OCI-LY7 (cell line): ENCODE measurements at regions of chr2 and their contacts with region 1.

Region 1: DNA sequence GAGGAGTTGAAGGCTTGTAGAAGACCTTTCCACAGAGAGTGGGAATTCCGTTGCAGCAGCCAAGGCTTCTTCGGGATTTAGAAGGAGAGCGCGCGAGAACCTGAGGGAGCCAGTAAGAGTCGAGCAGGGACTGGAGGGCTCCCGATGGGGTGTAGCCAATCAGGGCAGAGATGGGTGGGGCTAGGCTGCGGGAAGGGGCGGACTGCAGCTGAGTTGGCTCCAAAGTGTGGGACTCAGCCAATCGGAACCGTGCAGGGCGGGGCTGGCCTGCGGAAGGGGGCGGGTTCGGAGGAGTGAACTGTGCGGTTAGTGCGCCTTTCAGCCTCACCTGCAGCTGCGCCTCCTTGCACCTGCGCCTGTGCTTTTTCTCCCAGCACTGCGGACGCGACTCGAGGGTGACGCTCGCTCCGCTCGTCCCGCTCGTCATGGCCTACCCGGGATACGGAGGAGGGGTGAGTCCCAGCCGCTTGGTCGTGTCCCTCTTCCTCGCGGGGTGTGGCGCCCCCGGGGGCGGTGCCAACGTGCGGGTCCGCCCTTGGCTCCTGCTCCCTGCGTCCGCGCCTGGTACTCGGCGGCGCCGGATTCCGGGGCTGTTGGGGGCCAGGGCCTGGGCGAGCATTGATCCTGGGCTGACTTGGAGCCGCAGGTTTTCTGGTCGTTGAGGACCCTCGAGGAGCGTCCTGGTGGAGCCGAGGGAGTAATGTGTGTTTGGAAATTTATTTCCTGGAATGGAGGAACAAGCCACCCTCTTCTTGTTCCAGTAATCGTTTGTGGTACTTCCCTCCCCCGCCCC is at the start of gene GCA:
- DNase-seq: peak; percentile 95
- H3K4me3 ChIP-seq: peak within 1 kb of the TSS; percentile 81
- H3K27ac ChIP-seq: peak within 1 kb of the TSS; percentile 59
- H3K4me1 ChIP-seq: peaks cover 22% of the 10 kb centered on the region
- CTCF ChIP-seq: no peak
- total RNA-seq, gene GCA: 31.9 and 37.3 TPM in 2 replicates

Region 2: GRCh38 chr2:162317861-162318327 is 26.1 kb before region 1 on chr2:
- CTCF ChIA-PET with region 1: interaction called, 3 read pairs
- POLR2A ChIA-PET with region 1: interaction called, 8 read pairs
- intact Hi-C with region 1: loop called (anchors 1 kb)
- DNase-seq: peak; percentile 45
- H3K4me3 ChIP-seq: peak overlapping the region; percentile 100
- H3K27ac ChIP-seq: peak overlapping the region; percentile 74
- H3K4me1 ChIP-seq: peaks cover 36% of the 10 kb centered on the region
- CTCF ChIP-seq: no peak

Region 3: DNA sequence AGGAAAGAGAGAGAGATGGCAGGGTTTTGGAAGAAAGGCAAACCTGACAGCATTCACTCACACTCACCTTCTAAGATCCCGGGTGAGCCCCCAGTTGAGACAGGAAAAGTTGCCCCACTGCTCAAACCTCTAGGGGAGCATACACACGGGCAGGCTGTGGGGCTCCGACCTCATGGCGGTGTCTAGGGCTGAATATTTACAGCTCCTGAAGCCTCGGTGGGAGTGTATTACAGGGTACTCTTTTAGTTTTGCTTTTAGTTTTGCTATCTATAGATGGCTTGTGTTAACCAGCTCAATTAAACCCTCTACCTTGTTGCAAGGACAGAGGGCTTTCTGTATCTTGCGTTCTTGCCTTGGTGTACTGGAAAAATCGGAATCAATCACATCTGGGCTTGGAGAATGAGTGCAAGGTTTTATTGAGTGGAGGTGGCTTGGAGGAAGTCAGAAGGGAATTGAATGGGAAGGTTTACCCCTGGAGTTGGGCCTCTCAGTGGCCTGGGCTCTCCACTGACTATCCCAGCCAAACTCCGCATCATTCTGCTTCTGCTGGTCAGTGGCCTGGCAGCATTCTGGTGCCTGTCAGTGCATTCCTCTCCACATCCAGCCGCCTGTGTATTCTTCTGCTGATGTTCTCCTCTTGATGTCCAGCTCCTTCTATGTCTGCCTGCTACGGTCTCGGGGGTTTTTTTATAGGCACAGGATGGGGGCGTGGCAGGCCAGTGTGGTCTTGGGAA is 15.4 kb before region 1 on chr2:
- CTCF ChIA-PET with region 1: no interaction called
- POLR2A ChIA-PET with region 1: interaction called, 10 read pairs
- intact Hi-C with region 1: no loop called
- DNase-seq: no peak
- H3K4me3 ChIP-seq: no peak overlapping the region
- H3K27ac ChIP-seq: no peak overlapping the region
- H3K4me1 ChIP-seq: peaks cover 9% of the 10 kb centered on the region
- CTCF ChIP-seq: no peak

Region 4: DNA sequence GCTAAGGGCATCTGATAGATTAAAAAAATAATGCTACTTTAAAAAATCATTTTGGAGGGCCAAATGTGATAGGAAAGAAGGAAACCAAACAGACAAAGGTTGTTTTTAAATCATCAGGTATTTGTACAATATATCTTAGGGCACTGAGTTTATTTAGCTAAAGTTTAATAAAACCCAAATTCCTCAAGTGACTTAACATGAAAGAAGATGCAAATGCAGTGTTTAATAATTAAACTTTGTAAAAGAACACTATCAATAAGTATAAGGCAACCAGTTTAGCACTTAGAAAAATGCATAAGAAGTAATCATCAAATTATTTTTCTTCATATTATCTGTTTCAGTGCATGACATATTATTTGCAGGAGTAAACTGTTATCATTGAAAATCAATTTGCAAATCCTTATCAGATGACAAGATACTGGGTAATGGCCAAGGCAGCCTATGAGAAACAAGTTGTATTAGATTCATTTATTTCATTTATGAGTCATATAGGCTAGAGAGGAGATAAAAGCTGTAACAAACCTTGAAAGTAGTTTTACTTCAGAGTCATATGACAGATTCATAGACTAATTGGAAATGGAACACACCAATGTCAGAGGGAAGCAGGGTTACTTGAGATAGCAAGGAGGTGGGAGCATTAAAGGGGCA is 165.4 kb after region 1 on chr2:
- CTCF ChIA-PET with region 1: no interaction called
- POLR2A ChIA-PET with region 1: no interaction called
- intact Hi-C with region 1: no loop called
- DNase-seq: no peak
- H3K4me3 ChIP-seq: no peak overlapping the region
- H3K27ac ChIP-seq: no peak overlapping the region
- H3K4me1 ChIP-seq: no peaks in the 10 kb centered on the region
- CTCF ChIP-seq: no peak